Activated CD4-positive, alpha-beta memory T cell treated with anti-CD3 and anti-CD28 coated beads for 36 hours (primary cell): ENCODE measurements at regions of chr12 and their contacts with region 1.

Region 1: DNA sequence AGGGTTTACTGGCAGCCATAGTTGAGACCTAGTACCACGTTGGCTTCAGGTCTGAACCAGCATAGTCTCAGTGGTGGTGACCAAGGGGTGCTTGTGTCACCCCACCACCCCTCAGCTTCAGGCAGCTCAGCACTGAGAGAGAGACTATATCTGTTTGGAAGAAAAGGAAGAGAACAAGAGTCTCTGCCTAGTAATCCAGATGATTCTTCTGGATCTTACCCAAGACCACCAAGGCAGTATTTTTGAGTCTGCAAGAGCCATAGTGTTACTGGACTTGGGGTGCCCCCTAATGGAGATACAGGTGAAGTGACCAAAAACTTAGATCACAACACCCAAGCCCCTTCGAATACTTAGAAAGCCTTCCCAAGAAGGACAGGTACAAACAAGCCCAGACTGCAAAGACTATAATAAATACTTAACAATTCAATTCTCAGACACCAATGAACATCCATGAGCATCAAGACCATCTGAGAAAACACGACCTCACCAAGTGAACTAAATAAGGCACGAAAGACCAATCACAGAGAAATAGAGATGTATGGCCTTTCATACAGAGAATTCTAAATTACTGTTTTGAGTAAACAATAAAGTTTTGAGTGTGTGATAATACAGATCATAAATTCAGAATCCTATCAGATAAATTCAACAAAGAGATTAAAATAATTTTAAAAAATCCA is 107.0 kb downstream of the HELB start:
- DNase-seq: peak; percentile 35
- H3K4me3 Mint-ChIP-seq: no peak overlapping the region
- H3K27ac Mint-ChIP-seq: no peak overlapping the region
- H3K4me1 Mint-ChIP-seq: no peaks in the 10 kb centered on the region
- H3K27me3 Mint-ChIP-seq: peaks cover 8% of the 10 kb centered on the region

Region 2: DNA sequence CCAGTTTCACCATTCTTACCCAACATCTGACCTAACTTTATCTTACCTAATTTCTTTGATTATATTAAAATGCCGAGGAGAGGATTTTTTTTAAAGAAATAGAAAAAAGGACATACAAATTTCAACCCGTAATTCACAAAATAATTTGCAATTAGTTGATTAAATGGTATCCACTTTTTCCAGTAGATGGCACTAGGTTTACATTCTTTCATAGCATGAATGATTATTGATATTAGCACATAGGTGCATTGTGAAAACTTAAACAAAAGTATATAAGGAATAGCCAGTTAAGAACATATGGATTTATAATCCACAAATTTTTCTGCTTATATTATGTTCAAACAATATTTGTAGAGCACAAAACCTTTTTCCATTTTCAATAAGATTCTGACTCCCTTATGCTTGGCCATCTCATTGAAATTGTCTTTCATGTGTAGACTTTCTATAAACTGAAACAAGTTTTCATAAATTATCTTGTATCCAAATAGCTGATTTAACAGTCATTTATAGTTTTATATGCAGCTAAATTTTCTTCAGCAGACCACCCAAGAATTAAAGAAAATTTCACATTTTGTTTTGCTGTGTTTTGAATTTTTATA is 1095.5 kb before region 1 on chr12:
- CTCF ChIA-PET with region 1: no interaction called
- POLR2A ChIA-PET with region 1: no interaction called
- intact Hi-C with region 1: loop called (anchors 10 kb)
- DNase-seq: no peak
- H3K4me3 Mint-ChIP-seq: no peak overlapping the region
- H3K27ac Mint-ChIP-seq: no peak overlapping the region
- H3K4me1 Mint-ChIP-seq: no peaks in the 10 kb centered on the region
- H3K27me3 Mint-ChIP-seq: peaks cover 3% of the 10 kb centered on the region

Region 3: DNA sequence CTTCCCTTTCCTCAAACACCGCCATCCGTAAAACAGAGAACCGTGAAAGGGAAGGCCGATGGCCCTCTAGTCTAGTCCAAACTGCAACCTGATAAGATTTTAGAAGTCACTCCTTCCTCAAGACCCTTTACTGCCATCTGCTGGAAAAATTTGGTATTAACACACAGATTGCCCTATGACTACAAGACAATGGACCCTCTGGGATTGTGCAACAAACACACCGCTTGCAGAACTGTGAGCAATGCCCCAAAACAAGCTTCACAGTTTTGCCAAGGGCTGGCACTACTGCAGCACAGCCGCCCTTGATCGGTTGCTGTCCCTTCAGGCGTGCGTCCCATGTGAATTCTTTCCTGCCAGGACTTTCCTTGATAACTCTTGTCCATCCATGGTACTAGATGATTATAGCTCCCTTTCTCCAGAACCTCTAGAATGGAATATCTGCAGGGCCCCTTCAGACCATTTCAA is 301.9 kb before region 1 on chr12:
- CTCF ChIA-PET with region 1: no interaction called
- POLR2A ChIA-PET with region 1: no interaction called
- intact Hi-C with region 1: loop called (anchors 10 kb)
- DNase-seq: peak; percentile 21
- H3K4me3 Mint-ChIP-seq: no peak overlapping the region
- H3K27ac Mint-ChIP-seq: no peak overlapping the region
- H3K4me1 Mint-ChIP-seq: peaks cover 2% of the 10 kb centered on the region
- H3K27me3 Mint-ChIP-seq: peaks cover 10% of the 10 kb centered on the region

Region 4: DNA sequence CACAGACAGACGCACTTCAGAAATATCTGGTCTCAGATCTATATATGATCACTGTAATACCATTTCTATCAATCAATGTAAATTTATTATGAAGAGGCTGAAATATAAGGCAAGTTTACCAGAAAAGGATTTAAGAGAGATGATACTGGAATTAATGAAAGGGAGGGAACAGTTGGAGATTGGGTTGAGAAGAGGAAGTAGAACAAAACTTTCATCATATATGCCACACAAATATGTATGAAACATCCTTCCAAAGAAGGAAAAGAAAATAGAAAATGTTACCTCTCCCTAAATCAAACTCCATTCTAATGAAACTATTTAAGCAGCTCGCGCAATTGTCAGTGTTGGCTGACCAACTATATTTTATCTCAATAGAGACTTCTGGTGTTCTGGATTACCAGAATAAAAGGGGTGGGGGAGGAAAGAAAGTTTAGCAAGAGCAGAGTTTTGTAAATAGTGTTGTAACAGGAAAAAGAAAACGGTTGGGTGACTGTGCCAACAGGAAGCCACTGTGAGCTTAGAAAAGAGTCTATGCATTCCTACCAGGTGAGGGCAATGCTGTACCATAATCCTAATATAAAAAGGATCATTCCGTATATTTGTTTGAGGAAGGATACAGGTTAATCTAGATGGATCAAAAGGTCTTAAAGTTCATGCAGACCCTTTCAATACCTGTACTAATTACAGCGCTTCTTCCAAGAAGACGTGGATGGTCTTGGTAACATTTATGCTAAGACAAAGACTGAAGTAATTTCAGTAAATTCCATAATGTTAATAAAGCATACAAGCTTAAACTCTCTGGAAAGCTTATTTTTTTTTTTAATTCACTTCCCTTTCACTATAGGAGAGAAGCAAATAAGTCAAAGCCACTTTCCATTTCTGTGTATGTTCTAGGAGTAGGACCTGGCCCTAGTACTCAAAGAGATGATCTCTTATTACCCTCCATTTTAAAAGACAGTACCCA is 264.3 kb before region 1 on chr12:
- CTCF ChIA-PET with region 1: no interaction called
- POLR2A ChIA-PET with region 1: no interaction called
- intact Hi-C with region 1: loop called (anchors 2 kb)
- DNase-seq: no peak
- H3K4me3 Mint-ChIP-seq: no peak overlapping the region
- H3K27ac Mint-ChIP-seq: peak overlapping the region; percentile 49
- H3K4me1 Mint-ChIP-seq: peaks cover 9% of the 10 kb centered on the region
- H3K27me3 Mint-ChIP-seq: no peaks in the 10 kb centered on the region

Region 5: GRCh38 chr12:66269757-66270383 is 139.5 kb before region 1 on chr12:
- CTCF ChIA-PET with region 1: interaction called, 53 read pairs
- POLR2A ChIA-PET with region 1: interaction called, 3 read pairs
- intact Hi-C with region 1: loop called (anchors 1 kb)
- DNase-seq: peak; percentile 30
- H3K4me3 Mint-ChIP-seq: no peak overlapping the region
- H3K27ac Mint-ChIP-seq: no peak overlapping the region
- H3K4me1 Mint-ChIP-seq: peaks cover 4% of the 10 kb centered on the region
- H3K27me3 Mint-ChIP-seq: no peaks in the 10 kb centered on the region

Region 6: GRCh38 chr12:66279123-66279712 is 130.1 kb before region 1 on chr12:
- CTCF ChIA-PET with region 1: interaction called, 14 read pairs
- POLR2A ChIA-PET with region 1: no interaction called
- intact Hi-C with region 1: loop called (anchors 1 kb)
- DNase-seq: peak; percentile 60
- H3K4me3 Mint-ChIP-seq: no peak overlapping the region
- H3K27ac Mint-ChIP-seq: no peak overlapping the region
- H3K4me1 Mint-ChIP-seq: peaks cover 38% of the 10 kb centered on the region
- H3K27me3 Mint-ChIP-seq: no peaks in the 10 kb centered on the region

Region 7: GRCh38 chr12:66352197-66352596 is 57.1 kb before region 1 on chr12:
- CTCF ChIA-PET with region 1: no interaction called
- POLR2A ChIA-PET with region 1: no interaction called
- intact Hi-C with region 1: no loop called
- DNase-seq: no peak
- H3K4me3 Mint-ChIP-seq: no peak overlapping the region
- H3K27ac Mint-ChIP-seq: no peak overlapping the region
- H3K4me1 Mint-ChIP-seq: no peaks in the 10 kb centered on the region
- H3K27me3 Mint-ChIP-seq: no peaks in the 10 kb centered on the region